HCT116 (cell line): ENCODE measurements at regions of chr6 and their contacts with region 1.

Region 1: GRCh38 chr6:25070547-25071366 is 135.0 kb upstream of the RIPOR2 start:
- DNase-seq: peak; percentile 68
- ATAC-seq: peak; percentile 93
- H3K4me3 ChIP-seq: no peak overlapping the region
- H3K27ac ChIP-seq: no peak overlapping the region
- H3K4me1 ChIP-seq: no peaks in the 10 kb centered on the region
- H3K27me3 ChIP-seq: no peaks in the 10 kb centered on the region
- CTCF ChIP-seq: peak; percentile 69 to 88 (median 86)
- POLR2A ChIP-seq: no peak
- RAD21 ChIP-seq: peak; percentile 89

Region 2: DNA sequence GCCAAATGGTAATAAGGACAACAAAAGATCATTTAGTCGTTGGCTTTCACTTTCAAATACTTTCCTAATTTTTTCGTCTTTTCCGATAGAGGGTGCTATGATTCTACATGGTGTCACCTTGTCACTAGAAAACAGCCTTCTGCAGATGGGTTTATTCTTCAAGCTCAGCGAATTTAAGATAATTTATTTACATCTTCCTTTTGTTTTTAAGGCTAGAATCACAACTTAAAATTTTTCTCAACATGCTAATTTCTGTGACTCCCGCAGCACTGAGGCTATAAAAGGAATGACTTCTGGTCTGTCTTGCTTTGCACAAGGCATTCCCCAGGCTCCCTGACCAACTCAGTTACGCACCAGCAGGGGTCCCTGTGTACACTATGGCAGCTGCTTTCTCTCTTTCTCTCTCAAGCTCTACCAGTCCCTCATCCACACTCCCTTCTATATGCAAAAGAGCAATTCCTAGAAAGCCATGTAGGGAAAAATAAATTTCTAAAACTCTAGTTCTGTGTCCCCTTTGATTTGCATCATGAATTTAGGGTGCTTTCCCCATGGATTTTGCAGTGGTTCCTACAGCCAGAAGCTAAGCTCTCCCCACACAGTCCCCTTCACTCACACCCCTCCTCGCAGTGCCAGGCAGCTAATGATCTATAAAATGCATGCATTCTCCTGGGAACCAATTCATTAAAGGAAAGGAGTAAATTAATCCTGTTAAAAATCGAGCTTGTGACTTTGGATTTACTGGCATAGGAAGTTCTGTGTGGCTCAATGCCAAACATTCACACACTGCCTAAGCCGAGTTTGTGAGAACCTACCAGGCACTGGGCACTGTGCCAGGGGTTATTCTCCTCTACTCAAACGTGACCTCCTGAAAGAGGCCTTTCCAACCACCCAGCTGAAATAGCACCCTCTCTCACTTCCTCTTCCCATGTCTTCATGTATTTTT is 787.4 kb before region 1 on chr6:
- CTCF ChIA-PET with region 1: interaction called, 3 read pairs
- POLR2A ChIA-PET with region 1: no interaction called
- RAD21 ChIA-PET with region 1: no interaction called
- intact Hi-C with region 1: loop called (anchors 2 kb)
- DNase-seq: peak; percentile 65
- ATAC-seq: peak; percentile 97
- H3K4me3 ChIP-seq: peak overlapping the region; percentile 12; a peak in 3 of 4 replicates
- H3K27ac ChIP-seq: no peak overlapping the region
- H3K4me1 ChIP-seq: peaks cover 4 to 6% of the 10 kb centered on the region in 2 experiments; a peak in 2 of 4 replicates
- H3K27me3 ChIP-seq: peaks cover 10% of the 10 kb centered on the region; the same call in 1 of the 2 replicates
- CTCF ChIP-seq: peak; percentile 71 to 97 (median 72)
- POLR2A ChIP-seq: no peak
- RAD21 ChIP-seq: peak; percentile 72

Region 3: GRCh38 chr6:24520929-24521546 is 549.7 kb before region 1 on chr6:
- CTCF ChIA-PET with region 1: interaction called, 3 read pairs
- POLR2A ChIA-PET with region 1: no interaction called
- RAD21 ChIA-PET with region 1: no interaction called
- intact Hi-C with region 1: loop called (anchors 2 kb)
- DNase-seq: peak; percentile 23
- ATAC-seq: peak; percentile 100
- H3K4me3 ChIP-seq: no peak overlapping the region
- H3K27ac ChIP-seq: no peak overlapping the region
- H3K4me1 ChIP-seq: no peaks in the 10 kb centered on the region
- H3K27me3 ChIP-seq: no peaks in the 10 kb centered on the region
- CTCF ChIP-seq: peak; percentile 50 to 94 (median 85); a peak in 5 of 6 replicates
- POLR2A ChIP-seq: no peak
- RAD21 ChIP-seq: peak; percentile 50

Region 4: DNA sequence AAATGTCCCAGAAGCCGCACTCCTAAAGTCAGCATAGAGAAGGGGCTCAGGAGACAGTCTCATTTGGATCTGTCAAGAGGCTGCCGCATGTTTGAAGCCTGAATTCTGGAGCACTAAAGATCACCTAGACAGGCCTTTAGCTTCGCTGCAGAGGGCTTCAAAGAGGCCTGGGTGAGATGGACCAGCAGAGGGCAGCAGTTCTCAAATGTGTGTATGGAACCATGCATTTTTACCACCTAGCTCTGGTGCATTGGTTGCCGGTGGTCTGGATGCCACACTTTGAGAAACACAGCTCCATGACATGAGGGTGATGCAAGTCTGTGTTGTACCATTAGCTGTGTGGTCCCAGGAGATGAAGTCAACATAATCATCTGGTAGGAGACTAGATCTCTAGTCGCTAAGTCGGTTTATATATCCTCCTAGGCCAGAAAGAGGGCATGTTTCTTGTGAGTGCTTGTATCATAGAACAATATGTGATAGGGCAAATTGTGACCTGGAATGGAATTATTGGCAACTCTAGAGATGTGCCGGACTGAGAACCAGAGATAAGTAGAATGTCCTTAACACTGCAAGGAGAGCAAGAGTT is 489.6 kb before region 1 on chr6:
- CTCF ChIA-PET with region 1: interaction called, 4 read pairs
- POLR2A ChIA-PET with region 1: no interaction called
- RAD21 ChIA-PET with region 1: no interaction called
- intact Hi-C with region 1: loop called (anchors 1 kb)
- DNase-seq: peak; percentile 64
- ATAC-seq: peak; percentile 87
- H3K4me3 ChIP-seq: no peak overlapping the region
- H3K27ac ChIP-seq: no peak overlapping the region
- H3K4me1 ChIP-seq: peaks cover 3 to 13% of the 10 kb centered on the region in 2 experiments; a peak in 3 of 4 replicates
- H3K27me3 ChIP-seq: no peaks in the 10 kb centered on the region
- CTCF ChIP-seq: peak; percentile 68 to 90 (median 89)
- POLR2A ChIP-seq: no peak
- RAD21 ChIP-seq: peak; percentile 77

Region 5: DNA sequence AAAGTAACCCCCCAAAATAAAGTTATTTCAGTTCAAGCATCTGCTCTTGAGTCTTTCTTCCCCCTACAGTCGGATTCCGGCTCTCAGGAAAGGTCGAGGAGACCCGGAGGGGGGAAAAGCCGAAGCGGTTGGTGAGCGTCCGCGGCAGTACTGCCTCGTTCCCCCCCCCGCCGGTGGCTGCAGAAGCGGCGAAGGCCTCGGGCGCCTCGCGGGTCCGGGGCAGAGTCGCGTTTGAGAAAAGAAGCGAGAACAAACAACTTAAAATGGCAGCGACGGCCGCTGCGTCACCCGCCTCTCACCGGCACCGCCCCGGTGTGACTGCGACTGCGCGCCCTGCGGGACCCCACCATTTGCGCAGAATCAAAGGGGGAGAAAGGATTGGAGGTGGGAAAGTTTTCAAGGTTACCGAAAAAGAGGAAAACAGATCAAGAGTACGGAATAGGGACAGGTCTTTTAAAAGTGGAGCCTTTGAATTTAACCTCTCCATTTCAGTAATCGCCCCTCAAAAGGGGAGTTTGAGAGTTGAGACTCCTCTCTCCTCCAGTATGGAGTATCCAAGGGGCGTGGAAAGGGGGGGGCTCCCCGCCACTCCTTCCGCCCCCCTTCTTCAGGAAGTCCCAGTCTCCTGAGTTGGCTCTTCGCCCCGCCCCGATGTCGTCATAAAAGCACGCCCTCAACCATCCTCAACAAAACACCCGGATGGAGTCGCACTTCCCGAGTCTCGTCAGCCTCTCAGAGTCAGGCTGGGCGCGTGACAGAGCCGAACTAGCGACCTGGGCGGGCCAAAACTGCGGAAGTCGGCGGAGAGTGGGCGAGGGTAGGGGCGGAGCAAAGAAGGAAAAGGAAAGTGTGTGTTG is 349.9 kb before region 1 on chr6:
- CTCF ChIA-PET with region 1: no interaction called
- POLR2A ChIA-PET with region 1: no interaction called
- RAD21 ChIA-PET with region 1: no interaction called
- intact Hi-C with region 1: loop called (anchors 10 kb)
- DNase-seq: peak; percentile 99
- ATAC-seq: peak; percentile 93
- H3K4me3 ChIP-seq: peak overlapping the region; percentile 92 to 96
- H3K27ac ChIP-seq: peak overlapping the region; percentile 95
- H3K4me1 ChIP-seq: peaks cover 16 to 30% of the 10 kb centered on the region in 2 experiments; a peak in 3 of 4 replicates
- H3K27me3 ChIP-seq: no peaks in the 10 kb centered on the region
- CTCF ChIP-seq: no peak
- POLR2A ChIP-seq: peak; percentile 79
- RAD21 ChIP-seq: no peak

Region 6: DNA sequence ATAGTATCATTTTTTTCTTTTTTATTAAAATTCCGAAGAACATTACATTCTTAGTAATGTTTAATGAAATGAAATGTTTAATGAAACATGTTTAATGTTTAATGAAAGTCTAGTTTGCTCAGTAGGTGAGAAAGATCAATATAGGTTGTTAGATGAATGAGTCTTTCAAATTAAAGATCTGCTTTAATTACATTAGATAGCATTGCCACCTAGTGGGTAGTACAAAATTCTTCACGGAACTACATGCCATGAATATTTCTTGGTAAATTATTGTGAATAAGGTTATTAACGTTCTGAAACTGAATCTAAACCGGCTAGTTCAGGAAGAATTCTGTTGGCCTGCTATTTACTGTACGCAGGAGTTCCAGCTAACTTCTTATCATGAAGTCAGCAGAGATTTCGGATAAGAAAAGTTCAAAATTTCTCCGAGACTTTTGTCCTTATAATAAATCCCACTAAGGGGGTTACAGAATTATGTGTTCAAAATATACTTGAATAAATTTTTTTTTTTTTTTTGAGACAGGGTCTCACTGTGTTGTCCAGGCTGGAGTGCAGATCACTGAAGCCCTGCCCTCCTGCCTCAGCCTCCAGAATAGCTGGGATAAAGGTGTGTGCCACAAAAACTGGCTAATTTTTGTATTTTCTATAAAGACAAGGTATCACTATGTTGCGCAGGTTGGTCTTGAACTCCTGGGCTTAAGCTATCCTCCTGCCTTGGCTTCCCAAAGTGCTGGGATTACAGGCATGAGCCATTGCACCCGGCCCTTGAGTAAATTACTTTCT is 303.9 kb before region 1 on chr6:
- CTCF ChIA-PET with region 1: no interaction called
- POLR2A ChIA-PET with region 1: no interaction called
- RAD21 ChIA-PET with region 1: no interaction called
- intact Hi-C with region 1: loop called (anchors 2 kb)
- DNase-seq: no peak
- ATAC-seq: peak; percentile 71
- H3K4me3 ChIP-seq: no peak overlapping the region
- H3K27ac ChIP-seq: no peak overlapping the region
- H3K4me1 ChIP-seq: 0 out of 4 replicates have a peak, but pooled peaks cover 0 to 2% of the 10 kb centered on the region in 2 experiments
- H3K27me3 ChIP-seq: no peaks in the 10 kb centered on the region
- CTCF ChIP-seq: peak; percentile 28 to 71 (median 65); a peak in 5 of 6 replicates
- POLR2A ChIP-seq: no peak
- RAD21 ChIP-seq: peak; percentile 82

Region 7: GRCh38 chr6:24855395-24856245 is 215.1 kb before region 1 on chr6:
- CTCF ChIA-PET with region 1: interaction called, 14 read pairs
- POLR2A ChIA-PET with region 1: interaction called, 3 read pairs
- RAD21 ChIA-PET with region 1: interaction called in 1 of 2 experiments, 3 read pairs
- intact Hi-C with region 1: loop called (anchors 1 kb)
- DNase-seq: peak; percentile 54
- ATAC-seq: peak; percentile 94
- H3K4me3 ChIP-seq: peak overlapping the region; percentile 2 to 39
- H3K27ac ChIP-seq: no peak overlapping the region
- H3K4me1 ChIP-seq: peaks cover 3 to 10% of the 10 kb centered on the region in 2 experiments; a peak in 2 of 4 replicates
- H3K27me3 ChIP-seq: peaks cover 1% of the 10 kb centered on the region; the same call in 1 of the 2 replicates
- CTCF ChIP-seq: peak; percentile 79 to 85 (median 85)
- POLR2A ChIP-seq: no peak
- RAD21 ChIP-seq: peak; percentile 90

Region 8: DNA sequence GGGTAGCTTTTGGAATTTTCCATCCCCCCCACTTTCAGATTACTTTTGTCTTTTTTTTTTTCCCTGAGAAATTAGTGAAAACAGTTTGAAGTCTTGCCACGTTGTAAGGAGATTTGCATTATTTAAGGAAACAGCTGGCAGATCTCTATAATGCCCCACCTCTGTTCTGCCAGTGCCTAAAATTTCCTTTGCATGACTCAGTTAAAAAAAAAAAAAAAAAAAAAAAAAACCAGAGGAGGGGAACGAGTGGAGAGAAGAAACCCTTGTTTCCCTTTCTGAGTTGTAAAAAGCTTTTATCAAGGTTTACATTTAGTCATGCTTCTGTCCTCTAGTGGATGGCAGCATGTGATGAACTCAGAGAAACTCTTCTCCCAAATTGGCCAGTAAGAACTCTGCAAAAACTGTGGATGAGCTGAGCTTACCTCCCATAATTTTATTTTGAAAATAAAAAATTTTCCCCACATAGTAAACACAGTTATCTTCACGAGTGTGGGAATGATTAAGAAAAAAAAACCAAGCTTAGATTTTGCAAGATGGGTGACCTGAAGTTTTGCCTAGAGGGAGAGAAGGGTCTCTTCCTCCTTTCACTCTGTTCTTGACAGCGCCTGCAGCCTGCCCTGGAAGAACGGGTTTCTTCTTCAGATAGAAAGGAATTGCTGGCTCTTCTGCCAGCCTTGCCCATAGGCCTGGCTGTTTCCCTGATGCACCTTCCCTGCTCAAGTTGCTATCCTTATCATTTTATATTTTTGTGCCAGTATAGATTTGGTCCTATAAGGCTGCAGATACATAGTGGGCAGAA is 242.1 kb after region 1 on chr6:
- CTCF ChIA-PET with region 1: no interaction called
- POLR2A ChIA-PET with region 1: no interaction called
- RAD21 ChIA-PET with region 1: no interaction called
- intact Hi-C with region 1: no loop called
- DNase-seq: peak; percentile 13
- ATAC-seq: no peak
- H3K4me3 ChIP-seq: no peak overlapping the region; a peak in 1 of 4 replicates
- H3K27ac ChIP-seq: peak overlapping the region; percentile 26
- H3K4me1 ChIP-seq: peaks cover 31 to 39% of the 10 kb centered on the region in 2 experiments
- H3K27me3 ChIP-seq: no peaks in the 10 kb centered on the region
- CTCF ChIP-seq: no peak
- POLR2A ChIP-seq: no peak
- RAD21 ChIP-seq: no peak

Region 9: DNA sequence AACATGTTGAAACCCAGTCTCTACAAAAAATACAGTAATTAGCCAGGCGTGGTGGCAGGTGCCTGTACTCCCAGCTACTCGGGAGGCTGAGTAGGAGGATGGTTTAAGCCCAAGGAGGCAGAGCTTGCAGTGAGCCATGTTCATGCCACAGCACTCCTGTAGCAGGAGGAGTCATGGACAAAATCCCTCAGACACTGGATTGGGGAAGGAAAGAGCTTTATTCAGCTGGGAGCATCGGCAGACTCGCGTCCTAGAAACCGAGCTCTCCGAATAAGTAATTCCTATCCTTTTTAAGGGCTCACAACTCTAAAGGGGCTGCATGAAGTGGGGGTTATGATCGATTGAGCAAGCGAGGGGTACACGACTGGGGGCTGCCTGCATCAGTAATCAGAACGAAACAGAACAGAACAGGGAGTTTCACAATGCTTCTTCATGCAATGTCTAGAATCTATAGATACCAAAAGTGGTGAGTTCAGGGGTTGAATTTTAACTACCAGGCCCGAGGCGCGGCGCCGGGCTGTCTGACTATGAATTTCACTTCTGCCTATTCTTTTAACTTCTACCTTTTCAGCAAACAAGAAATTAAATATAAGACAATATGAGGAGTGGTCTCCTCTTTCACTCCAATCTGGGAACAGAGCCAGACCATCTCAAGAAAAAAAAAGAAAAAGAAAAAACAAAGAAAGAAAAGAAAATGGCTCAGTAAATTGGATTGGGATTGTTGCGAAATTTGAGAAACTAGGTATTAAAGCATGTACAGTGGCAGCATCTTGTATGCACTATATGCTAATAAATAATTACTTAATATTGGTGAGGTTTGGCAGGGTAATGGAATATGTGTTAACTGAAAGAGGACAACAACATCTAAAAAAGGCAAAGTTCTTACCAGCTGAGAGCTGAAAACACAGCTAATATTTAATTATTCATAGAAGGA is 1491.0 kb after region 1 on chr6:
- CTCF ChIA-PET with region 1: no interaction called
- POLR2A ChIA-PET with region 1: no interaction called
- RAD21 ChIA-PET with region 1: no interaction called
- intact Hi-C with region 1: no loop called
- DNase-seq: no peak
- ATAC-seq: no peak
- H3K4me3 ChIP-seq: no peak overlapping the region
- H3K27ac ChIP-seq: no peak overlapping the region
- H3K4me1 ChIP-seq: peaks cover 3 to 6% of the 10 kb centered on the region in 2 experiments; a peak in 2 of 4 replicates
- H3K27me3 ChIP-seq: no peaks in the 10 kb centered on the region
- CTCF ChIP-seq: no peak
- POLR2A ChIP-seq: no peak
- RAD21 ChIP-seq: no peak